KBM-7 (cell line): ENCODE measurements at regions of chr9 and their contacts with region 1.

Region 1: GRCh38 chr9:115615821-115616665 is 498.1 kb upstream of the TNC start:
- DNase-seq: no peak

Region 2: GRCh38 chr9:116572095-116572748 is 956.2 kb after region 1 on chr9:
- in situ Hi-C with region 1: loop called (anchors 25 kb)
- DNase-seq: peak; percentile 80